ENCODE measurements at regions of chr2 and their contacts with region 1.

Region 1: GRCh38 chr2:98822301-98823164 is 91.6 kb upstream of the MGAT4A start:
- DNase-seq: peak; percentile 37 to 83 (median 58)
- ATAC-seq: peak; percentile 91
- H3K4me3 ChIP-seq: peak overlapping the region; percentile 50 to 53
- H3K4me3 Mint-ChIP-seq: peak overlapping the region; percentile 58
- H3K27ac ChIP-seq: peak overlapping the region in 1 of 2 experiments; percentile 24
- H3K27ac Mint-ChIP-seq: no peak overlapping the region
- H3K4me1 ChIP-seq: peaks cover under 1% of the 10 kb centered on the region
- H3K4me1 Mint-ChIP-seq: peaks cover 22% of the 10 kb centered on the region
- H3K27me3 ChIP-seq: no peaks in the 10 kb centered on the region
- H3K27me3 Mint-ChIP-seq: no peaks in the 10 kb centered on the region
- CTCF ChIP-seq: peak; percentile 19

Region 2: DNA sequence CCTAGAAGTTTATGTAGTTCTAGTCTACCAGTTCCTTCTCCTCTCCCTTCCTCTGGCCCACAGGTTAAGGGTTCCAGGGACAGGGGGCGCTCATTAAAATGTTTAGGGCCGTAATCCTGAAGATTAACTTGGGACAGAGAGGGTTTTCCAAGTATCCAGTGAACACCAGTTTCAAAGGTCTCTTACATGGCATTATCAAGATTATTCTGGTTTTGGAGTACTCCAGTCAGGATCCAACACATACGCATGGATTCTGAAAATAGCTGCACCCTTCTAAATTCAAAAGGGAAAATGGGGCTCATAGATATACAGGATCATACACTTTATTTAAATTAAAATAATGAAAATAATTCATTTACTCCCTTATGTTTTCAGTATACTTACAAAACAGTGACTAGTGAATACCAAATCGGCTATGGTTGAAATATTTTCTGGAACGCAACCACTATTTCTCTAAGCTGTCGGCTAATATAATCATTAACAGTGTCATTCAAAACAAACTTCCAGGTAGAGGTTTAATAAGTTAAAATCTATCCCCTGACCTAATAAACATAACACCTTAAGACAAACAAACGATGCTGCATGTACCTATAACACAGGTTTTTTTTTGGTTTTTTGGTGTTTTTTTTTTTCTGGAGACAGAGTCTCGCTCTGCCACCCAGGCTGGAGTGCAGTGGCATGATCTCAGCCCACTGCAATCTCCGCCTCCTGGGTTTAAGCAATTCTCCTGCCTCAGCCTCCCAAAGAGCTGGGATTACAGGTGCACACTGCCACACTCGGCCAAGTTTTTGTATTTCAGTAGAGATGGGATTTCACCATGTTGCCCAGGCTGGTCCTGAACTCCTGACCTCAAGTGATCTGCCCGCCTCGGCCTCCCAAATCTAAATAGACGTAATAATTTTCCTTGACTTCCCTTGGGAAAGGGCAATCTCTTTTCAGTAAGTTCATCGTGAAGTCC is 136.3 kb before region 1 on chr2:
- CTCF ChIA-PET with region 1: no interaction called
- POLR2A ChIA-PET with region 1: no interaction called
- intact Hi-C with region 1: no loop called
- DNase-seq: no peak
- ATAC-seq: no peak
- H3K4me3 ChIP-seq: no peak overlapping the region
- H3K4me3 Mint-ChIP-seq: no peak overlapping the region
- H3K27ac ChIP-seq: no peak overlapping the region
- H3K27ac Mint-ChIP-seq: peak overlapping the region; percentile 94
- H3K4me1 ChIP-seq: peaks cover 75% of the 10 kb centered on the region
- H3K4me1 Mint-ChIP-seq: peaks cover 87% of the 10 kb centered on the region
- H3K27me3 ChIP-seq: no peaks in the 10 kb centered on the region
- H3K27me3 Mint-ChIP-seq: no peaks in the 10 kb centered on the region
- CTCF ChIP-seq: no peak

Region 3: GRCh38 chr2:98781822-98782221 is 40.7 kb before region 1 on chr2:
- CTCF ChIA-PET with region 1: no interaction called
- POLR2A ChIA-PET with region 1: no interaction called
- intact Hi-C with region 1: no loop called
- DNase-seq: no peak
- ATAC-seq: no peak
- H3K4me3 ChIP-seq: no peak overlapping the region
- H3K4me3 Mint-ChIP-seq: no peak overlapping the region
- H3K27ac ChIP-seq: no peak overlapping the region
- H3K27ac Mint-ChIP-seq: no peak overlapping the region
- H3K4me1 ChIP-seq: no peaks in the 10 kb centered on the region
- H3K4me1 Mint-ChIP-seq: no peaks in the 10 kb centered on the region
- H3K27me3 ChIP-seq: no peaks in the 10 kb centered on the region
- H3K27me3 Mint-ChIP-seq: no peaks in the 10 kb centered on the region
- CTCF ChIP-seq: no peak

Region 4: GRCh38 chr2:98806236-98806697 is 16.3 kb before region 1 on chr2:
- CTCF ChIA-PET with region 1: interaction called, 15 read pairs
- POLR2A ChIA-PET with region 1: no interaction called
- intact Hi-C with region 1: no loop called
- DNase-seq: no peak
- ATAC-seq: no peak
- H3K4me3 ChIP-seq: no peak overlapping the region
- H3K4me3 Mint-ChIP-seq: no peak overlapping the region
- H3K27ac ChIP-seq: no peak overlapping the region
- H3K27ac Mint-ChIP-seq: no peak overlapping the region
- H3K4me1 ChIP-seq: peaks cover 7% of the 10 kb centered on the region
- H3K4me1 Mint-ChIP-seq: peaks cover 16% of the 10 kb centered on the region
- H3K27me3 ChIP-seq: no peaks in the 10 kb centered on the region
- H3K27me3 Mint-ChIP-seq: no peaks in the 10 kb centered on the region
- CTCF ChIP-seq: no peak

Region 5: DNA sequence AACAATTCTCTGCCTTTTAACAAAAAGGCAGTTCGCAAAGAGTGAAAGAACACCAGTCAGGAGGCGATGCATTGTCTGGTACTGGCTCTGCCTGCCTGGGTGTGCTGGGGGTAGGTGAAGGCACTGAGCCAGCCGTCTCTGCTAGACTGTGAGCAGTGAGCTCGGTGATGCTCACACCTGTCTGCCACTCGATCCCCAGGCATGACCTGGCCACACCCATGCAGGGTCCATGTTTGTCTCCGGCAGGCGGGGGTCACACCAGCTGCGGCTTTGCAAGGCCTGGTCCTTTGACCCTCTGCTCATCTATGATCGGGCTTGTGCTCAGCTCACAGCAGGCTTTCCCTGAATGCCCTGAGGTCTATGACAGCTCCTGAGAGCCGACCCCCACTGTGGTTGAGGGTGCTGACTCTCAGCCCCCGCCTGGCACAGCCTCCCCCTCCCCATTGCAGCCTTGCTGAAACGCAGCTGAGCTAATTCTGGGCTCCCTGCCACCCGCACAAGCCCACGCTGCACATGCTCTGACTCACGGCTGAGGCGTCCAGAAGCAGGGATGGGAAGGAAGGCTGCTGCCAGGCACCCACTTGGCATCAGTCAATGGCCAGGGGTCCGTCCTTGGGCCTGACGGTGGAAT is 89.8 kb after region 1 on chr2:
- CTCF ChIA-PET with region 1: no interaction called
- POLR2A ChIA-PET with region 1: no interaction called
- intact Hi-C with region 1: no loop called
- DNase-seq: peak in 1 of 9 experiments; percentile 36
- ATAC-seq: peak; percentile 13
- H3K4me3 ChIP-seq: no peak overlapping the region
- H3K4me3 Mint-ChIP-seq: peak overlapping the region; percentile 51
- H3K27ac ChIP-seq: no peak overlapping the region
- H3K27ac Mint-ChIP-seq: no peak overlapping the region
- H3K4me1 ChIP-seq: peaks cover 56% of the 10 kb centered on the region
- H3K4me1 Mint-ChIP-seq: peaks cover 48% of the 10 kb centered on the region
- H3K27me3 ChIP-seq: no peaks in the 10 kb centered on the region
- H3K27me3 Mint-ChIP-seq: peaks cover 31% of the 10 kb centered on the region
- CTCF ChIP-seq: no peak